ENCODE measurements at regions of chr10 and their contacts with region 1.

Region 1: GRCh38 chr10:103685880-103686669 is 169.3 kb downstream of the SH3PXD2A start:
- DNase-seq: no peak
- H3K4me3 ChIP-seq: no peak overlapping the region
- H3K27ac ChIP-seq: peak overlapping the region; percentile 47
- H3K27me3 ChIP-seq: no peaks in the 10 kb centered on the region
- CTCF ChIP-seq: peak; percentile 98

Region 2: DNA sequence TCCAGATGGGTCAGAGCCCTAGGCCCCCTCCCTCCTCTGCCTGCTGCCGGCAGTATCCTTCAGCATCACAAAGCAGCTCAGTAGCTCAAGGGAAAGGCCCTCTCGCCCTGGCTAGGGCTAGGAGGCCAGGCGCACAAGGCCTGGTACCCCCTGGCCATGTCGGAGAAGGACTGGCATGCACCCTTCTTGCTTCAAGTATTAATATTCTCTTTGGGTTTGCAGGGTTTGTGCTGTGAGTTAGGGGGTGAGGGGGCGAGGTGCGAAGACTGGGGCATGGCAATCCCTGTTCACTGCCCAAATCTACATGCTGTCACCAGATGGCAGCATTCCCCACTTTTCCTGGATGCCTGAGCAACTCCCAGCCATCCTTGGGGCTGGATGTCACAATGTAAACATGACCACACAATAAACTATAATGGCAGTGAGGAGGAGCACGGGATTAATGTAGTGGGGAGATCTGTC is 87.4 kb before region 1 on chr10:
- CTCF ChIA-PET with region 1: interaction called, 146 read pairs
- POLR2A ChIA-PET with region 1: interaction called, 3 read pairs
- DNase-seq: peak; percentile 60
- H3K4me3 ChIP-seq: no peak overlapping the region
- H3K27ac ChIP-seq: no peak overlapping the region
- H3K27me3 ChIP-seq: no peaks in the 10 kb centered on the region
- CTCF ChIP-seq: peak; percentile 78

Region 3: DNA sequence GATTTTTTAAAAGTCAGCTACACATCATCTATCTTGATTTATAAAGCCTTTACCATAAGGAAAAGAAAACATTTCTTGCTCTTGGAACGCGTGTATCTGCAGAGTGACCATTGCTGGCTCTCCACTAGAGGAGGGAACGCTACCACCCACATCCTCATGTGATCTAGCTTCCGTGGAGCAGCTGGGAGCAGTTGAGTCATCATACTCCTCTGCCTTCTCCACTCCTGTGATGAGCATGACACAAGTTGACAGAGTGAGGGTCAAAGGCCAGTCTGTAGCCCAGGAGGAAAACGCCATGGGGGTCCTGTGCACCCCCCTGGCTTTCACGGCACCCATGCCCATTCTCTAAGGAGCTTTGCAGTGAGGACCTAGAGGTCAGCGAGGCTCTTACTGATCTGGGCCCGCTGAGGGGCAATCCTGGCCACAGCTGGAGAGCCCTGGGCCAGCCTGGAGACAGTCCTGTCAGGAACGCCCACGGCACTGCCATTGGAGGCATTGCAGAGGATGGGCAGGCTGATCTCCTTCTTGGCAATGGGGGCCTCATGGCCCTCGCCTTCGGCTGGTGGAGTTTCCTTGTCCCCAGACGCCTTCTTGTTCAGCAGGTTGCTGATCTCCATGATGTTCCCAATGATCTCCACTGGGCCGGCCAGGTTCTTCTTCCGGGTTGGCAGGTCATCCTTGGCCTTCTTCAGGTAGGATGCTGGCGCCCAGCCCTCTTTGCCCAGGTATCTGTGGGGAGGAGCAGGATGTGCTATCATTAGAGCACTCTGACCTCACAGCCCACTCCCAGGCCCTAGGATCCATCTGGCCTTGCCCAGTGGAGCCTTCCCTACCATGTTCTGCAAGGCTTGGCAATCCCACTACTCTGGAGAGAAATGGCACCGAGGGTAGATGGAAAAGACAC is 73.4 kb before region 1 on chr10:
- CTCF ChIA-PET with region 1: interaction called, 50 read pairs
- POLR2A ChIA-PET with region 1: no interaction called
- DNase-seq: peak; percentile 54
- H3K4me3 ChIP-seq: no peak overlapping the region
- H3K27ac ChIP-seq: peak overlapping the region; percentile 73
- H3K27me3 ChIP-seq: no peaks in the 10 kb centered on the region
- CTCF ChIP-seq: peak; percentile 39

Region 4: DNA sequence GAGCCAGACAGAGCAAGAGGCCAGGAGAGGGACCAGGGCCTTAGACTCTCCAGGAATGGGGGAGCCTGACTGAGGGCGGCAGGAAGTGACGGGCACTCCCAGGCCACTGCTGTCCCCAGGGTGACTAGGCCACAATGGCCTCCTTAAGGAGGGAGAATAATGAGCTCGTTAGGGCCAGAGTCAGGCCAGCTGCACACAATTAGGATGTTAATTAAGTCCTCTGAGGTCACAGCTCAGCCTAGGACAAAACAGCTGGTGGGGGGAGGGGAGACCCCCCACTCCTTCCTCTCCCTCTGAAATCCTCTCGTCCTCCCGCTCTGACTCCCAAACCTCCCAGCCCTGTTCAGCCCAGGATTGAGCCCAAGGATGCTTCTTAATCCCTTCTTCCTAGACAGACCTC is 49.6 kb before region 1 on chr10:
- CTCF ChIA-PET with region 1: interaction called, 11 read pairs
- POLR2A ChIA-PET with region 1: no interaction called
- DNase-seq: no peak
- H3K4me3 ChIP-seq: no peak overlapping the region
- H3K27ac ChIP-seq: no peak overlapping the region
- H3K27me3 ChIP-seq: no peaks in the 10 kb centered on the region
- CTCF ChIP-seq: no peak

Region 5: DNA sequence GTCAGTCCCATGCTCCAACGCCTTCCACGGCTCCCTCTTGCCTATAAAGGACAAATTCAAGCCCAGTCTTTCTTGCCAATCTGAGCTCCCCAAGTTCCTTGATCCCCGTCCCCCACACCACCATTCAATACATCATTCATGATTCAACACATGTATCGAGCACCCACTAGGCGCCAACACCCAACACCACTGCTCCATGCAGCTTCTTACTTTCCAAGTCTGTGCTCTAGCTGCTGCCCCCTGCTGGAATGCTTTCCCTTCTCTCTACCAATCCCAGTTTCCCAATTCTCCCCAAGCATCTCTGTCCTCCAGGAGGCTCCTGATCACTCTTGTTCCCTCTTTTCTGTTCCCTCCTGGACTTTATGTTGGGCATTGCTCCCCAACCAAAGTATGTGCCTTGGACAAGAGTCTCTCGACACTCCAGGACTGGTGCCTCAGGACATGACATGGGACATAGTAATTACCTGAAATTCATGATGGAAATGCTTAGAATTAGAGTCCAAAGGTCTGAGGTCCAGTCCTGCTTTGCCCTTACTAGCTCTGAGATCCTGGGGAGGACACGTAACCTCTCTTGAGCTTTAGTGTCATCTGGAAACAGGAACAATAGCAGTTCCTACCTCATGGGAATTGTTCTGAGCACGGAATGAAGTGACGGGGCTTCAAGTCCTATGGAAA is 19.9 kb before region 1 on chr10:
- CTCF ChIA-PET with region 1: interaction called, 53 read pairs
- POLR2A ChIA-PET with region 1: interaction called, 6 read pairs
- DNase-seq: no peak
- H3K4me3 ChIP-seq: no peak overlapping the region
- H3K27ac ChIP-seq: no peak overlapping the region
- H3K27me3 ChIP-seq: no peaks in the 10 kb centered on the region
- CTCF ChIP-seq: peak; percentile 53

Region 6: DNA sequence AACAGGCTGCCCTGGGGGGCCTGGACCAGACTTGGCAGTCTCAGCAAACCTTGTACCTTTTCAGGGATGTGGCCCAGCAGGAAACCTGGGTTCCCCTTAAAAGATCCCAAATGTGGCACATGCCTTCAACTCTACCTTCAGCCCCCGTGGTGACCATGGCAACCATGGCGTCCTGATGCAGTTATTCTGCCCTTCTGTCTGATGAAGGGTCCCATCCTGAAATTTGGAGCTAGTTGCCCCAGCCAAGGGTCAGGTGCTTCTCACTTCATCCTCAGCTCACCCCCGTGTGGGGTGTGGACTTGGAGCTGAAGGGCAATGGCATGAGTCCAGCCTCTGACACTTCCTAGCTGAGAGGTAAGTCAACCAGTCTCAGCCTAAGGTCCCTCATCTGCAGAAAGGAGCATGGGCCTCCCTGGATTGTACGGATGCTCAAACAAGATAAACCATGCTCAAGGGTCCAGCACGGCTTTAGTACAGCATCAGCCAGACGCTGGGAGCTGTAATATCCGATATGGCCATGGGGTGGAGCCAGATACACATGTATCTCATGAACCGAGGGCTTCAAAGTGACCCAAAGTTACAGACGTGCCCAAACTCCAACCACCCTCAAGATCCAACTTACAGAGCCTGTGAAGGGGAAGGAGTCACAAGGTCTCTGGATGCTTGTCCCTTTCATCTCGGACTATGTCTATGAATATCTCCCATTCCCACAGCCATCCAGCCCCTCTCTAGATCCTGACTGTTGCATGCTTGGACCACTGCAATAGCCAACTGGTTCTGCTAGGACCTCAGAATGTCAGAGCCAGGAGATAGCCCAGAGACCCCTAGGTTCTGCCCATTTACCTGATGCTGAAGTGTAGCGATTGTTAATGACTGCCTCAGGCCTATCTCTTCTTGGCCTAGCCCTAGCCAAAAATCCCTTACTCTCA is 26.8 kb after region 1 on chr10:
- CTCF ChIA-PET with region 1: interaction called, 13 read pairs
- POLR2A ChIA-PET with region 1: no interaction called
- DNase-seq: peak; percentile 58
- H3K4me3 ChIP-seq: no peak overlapping the region
- H3K27ac ChIP-seq: no peak overlapping the region
- H3K27me3 ChIP-seq: no peaks in the 10 kb centered on the region
- CTCF ChIP-seq: peak; percentile 85

Measured in AG04450 (cell line).